ENCODE measurements at regions of chrX and their contacts with region 1.

Region 1: DNA sequence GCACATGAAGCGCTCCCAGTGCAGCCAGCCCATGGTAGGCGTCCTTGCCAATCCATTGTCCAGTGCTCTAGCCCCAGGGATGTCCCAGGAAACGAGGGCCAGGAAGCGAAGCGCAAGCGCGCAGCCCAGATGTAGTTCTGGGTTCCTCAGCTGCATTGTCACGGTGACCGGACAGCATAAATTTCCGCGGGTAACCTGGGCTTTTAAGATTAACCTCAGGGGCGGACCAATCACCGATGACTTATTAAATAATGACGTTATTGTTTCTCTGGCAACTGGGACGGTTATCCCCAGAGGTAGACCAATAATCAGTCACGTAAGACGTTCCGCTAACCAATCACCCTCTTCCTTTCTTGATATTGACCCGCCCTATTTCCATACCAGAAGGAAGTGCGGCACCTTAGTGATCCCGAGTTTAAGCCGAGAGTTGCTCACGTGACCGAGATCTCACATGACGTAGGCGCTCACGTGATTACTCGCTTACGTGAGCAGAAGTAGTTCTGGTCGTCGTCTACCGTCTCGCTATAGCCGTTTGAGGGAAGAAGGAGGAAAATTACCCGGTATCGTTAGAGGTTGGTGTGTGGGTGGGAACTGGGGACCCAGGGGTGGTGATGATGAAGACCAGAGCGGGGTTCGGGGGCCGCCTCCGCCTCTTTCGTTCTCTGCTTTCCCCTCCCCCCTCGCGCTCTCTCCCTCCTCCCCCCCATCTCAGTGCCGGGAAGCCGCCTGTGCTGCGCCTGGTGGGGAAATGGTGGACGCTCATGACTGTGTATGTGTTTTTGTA is at the starts of genes GLA and HNRNPH2:
- DNase-seq: peak; percentile 74 to 98 (median 85)
- ATAC-seq: peak; percentile 88
- H3K4me3 ChIP-seq: peak within 1 kb of the TSS; percentile 88 to 91
- H3K4me3 Mint-ChIP-seq: peak within 1 kb of the TSS; percentile 93
- H3K27ac ChIP-seq: peak within 1 kb of the TSS; percentile 98 to 99
- H3K27ac Mint-ChIP-seq: peak within 1 kb of the TSS; percentile 99
- H3K4me1 ChIP-seq: peaks cover 24% of the 10 kb centered on the region
- H3K4me1 Mint-ChIP-seq: peaks cover 37% of the 10 kb centered on the region
- H3K27me3 ChIP-seq: no peaks in the 10 kb centered on the region
- H3K27me3 Mint-ChIP-seq: no peaks in the 10 kb centered on the region
- CTCF ChIP-seq: no peak
- total RNA-seq, gene GLA: 31.7 to 32.0 TPM
- total RNA-seq, gene HNRNPH2: 43.2 to 47.3 TPM

Region 2: DNA sequence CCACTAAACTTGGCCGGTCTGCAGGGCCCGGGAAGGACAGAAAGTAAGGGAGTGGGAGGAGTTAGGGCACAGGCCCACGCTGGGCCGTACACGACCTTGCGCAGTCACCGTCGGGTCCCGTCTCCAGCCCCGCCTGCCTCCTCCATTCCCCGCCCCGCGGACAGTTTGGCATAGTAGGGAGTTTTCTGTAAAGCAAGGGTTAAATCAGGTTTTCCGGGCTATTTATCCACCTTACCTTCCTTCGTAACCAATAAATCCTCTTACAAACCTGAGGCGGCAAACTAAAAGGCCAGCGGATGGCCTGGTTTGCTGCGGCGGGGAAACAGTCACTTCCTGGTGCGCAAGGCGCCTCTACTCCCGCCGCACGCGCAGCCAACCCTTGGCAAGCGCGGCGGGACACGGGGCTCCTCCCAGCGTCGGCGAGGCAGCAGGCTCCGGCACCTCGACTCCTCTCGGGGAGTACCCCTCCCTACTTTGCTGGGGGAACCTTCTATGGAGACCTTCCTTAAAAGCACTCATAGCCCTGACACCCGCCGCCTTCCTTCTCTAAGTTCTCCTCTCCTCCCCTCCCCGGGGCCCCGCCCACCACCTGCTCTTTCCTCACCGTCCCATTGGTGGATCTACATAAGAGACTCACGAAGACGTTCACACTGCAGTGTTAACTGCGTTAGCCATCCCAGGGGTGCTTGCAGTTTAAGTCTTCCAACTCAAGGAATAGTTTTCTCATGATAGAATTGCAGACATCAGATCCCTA is 356.2 kb before region 1 on chrX and contains the start of gene TRMT2B:
- CTCF ChIA-PET with region 1: no interaction called
- POLR2A ChIA-PET with region 1: no interaction called
- intact Hi-C with region 1: loop called (anchors 1 to 5 kb)
- DNase-seq: peak; percentile 56 to 88 (median 80)
- ATAC-seq: peak; percentile 85
- H3K4me3 ChIP-seq: peak within 1 kb of the TSS; percentile 51 to 70
- H3K4me3 Mint-ChIP-seq: peak within 1 kb of the TSS; percentile 91
- H3K27ac ChIP-seq: peak within 1 kb of the TSS; percentile 94 to 96
- H3K27ac Mint-ChIP-seq: peak within 1 kb of the TSS; percentile 98
- H3K4me1 ChIP-seq: peaks cover 11% of the 10 kb centered on the region
- H3K4me1 Mint-ChIP-seq: peaks cover 29% of the 10 kb centered on the region
- H3K27me3 ChIP-seq: no peaks in the 10 kb centered on the region
- H3K27me3 Mint-ChIP-seq: no peaks in the 10 kb centered on the region
- CTCF ChIP-seq: no peak
- total RNA-seq, gene TRMT2B: 27.8 to 28.0 TPM

Region 3: DNA sequence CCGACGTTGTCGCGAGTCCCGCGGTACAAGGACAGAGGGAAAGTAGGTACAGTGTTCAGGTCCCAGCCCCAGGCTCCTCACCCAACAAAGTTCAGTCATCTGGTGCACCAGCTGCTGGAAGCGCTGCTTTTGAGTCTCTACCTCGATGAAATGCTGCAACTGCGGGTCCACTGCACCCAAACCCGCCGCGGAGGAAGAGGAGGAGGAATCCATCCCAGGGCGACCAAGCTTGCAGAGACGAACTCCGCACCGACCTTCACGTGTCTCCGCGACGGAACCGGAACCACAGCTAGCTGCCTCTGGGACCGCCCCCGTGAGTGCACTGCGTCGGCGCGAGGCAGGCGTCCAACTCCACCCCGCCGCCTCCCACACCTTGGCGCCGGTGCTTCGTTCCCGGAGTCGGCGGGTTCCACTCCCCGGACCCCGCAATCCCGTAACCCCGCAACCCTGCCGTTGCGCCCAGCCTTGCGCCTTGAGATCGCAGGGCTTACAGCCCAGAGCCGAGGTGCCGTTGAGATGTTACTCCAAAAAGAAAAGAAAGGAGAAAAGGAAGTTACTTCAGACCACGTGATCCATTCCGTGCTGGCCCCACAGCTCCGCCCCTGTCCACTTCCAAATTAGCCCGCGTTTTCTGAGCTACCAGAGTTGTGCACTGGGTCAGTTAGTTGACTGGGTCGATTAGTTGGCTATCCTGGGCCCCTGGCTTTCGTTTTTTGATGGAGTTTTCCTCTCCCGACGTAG is 59.3 kb before region 1 on chrX and contains the start of gene TIMM8A:
- CTCF ChIA-PET with region 1: no interaction called
- POLR2A ChIA-PET with region 1: no interaction called
- intact Hi-C with region 1: loop called (anchors 1 to 2 kb)
- DNase-seq: peak; percentile 50 to 85 (median 77)
- ATAC-seq: peak; percentile 98
- H3K4me3 ChIP-seq: peak within 1 kb of the TSS; percentile 90 to 97
- H3K4me3 Mint-ChIP-seq: peak within 1 kb of the TSS; percentile 91
- H3K27ac ChIP-seq: peak within 1 kb of the TSS; percentile 78 to 90
- H3K27ac Mint-ChIP-seq: peak within 1 kb of the TSS; percentile 91
- H3K4me1 ChIP-seq: peaks cover 9% of the 10 kb centered on the region
- H3K4me1 Mint-ChIP-seq: peaks cover 16% of the 10 kb centered on the region
- H3K27me3 ChIP-seq: no peaks in the 10 kb centered on the region
- H3K27me3 Mint-ChIP-seq: no peaks in the 10 kb centered on the region
- CTCF ChIP-seq: no peak
- total RNA-seq, gene TIMM8A: 7.0 to 8.1 TPM

Region 4: GRCh38 chrX:101658661-101659491 is 250.9 kb after region 1 on chrX:
- CTCF ChIA-PET with region 1: no interaction called
- POLR2A ChIA-PET with region 1: no interaction called
- intact Hi-C with region 1: loop called in 1 of 2 experiments (anchors 2 kb)
- DNase-seq: peak in 8 of 9 experiments; percentile 32 to 72 (median 62)
- ATAC-seq: peak; percentile 82
- H3K4me3 ChIP-seq: peak overlapping the region; percentile 65
- H3K4me3 Mint-ChIP-seq: peak overlapping the region; percentile 85
- H3K27ac ChIP-seq: peak overlapping the region in 1 of 2 experiments; percentile 30
- H3K27ac Mint-ChIP-seq: peak overlapping the region; percentile 82
- H3K4me1 ChIP-seq: peaks cover 4% of the 10 kb centered on the region
- H3K4me1 Mint-ChIP-seq: peaks cover 22% of the 10 kb centered on the region
- H3K27me3 ChIP-seq: no peaks in the 10 kb centered on the region
- H3K27me3 Mint-ChIP-seq: peaks cover 2% of the 10 kb centered on the region
- CTCF ChIP-seq: no peak